B cell (primary cell): ENCODE measurements at regions of chr19 and their contacts with region 1.

Region 1: GRCh38 chr19:16476401-16476800 is 4.6 kb upstream of the EPS15L1 start:
- DNase-seq: no peak
- ATAC-seq: no peak
- H3K4me3 ChIP-seq: no peak overlapping the region
- H3K4me3 Mint-ChIP-seq: no peak overlapping the region
- H3K27ac ChIP-seq: no peak overlapping the region
- H3K27ac Mint-ChIP-seq: no peak overlapping the region
- H3K4me1 ChIP-seq: peaks cover 0 to 6% of the 10 kb centered on the region in 2 donors
- H3K4me1 Mint-ChIP-seq: no peaks in the 10 kb centered on the region
- H3K27me3 ChIP-seq: no peaks in the 10 kb centered on the region
- H3K27me3 Mint-ChIP-seq: no peaks in the 10 kb centered on the region
- CTCF ChIP-seq: no peak

Region 2: GRCh38 chr19:15332311-15332996 is 1143.9 kb before region 1 on chr19 and contains the start of gene BRD4:
- CTCF ChIA-PET with region 1: no interaction called
- POLR2A ChIA-PET with region 1: no interaction called
- intact Hi-C with region 1: no loop called
- DNase-seq: peak; percentile 89
- ATAC-seq: peak; percentile 37
- H3K4me3 ChIP-seq: peak within 1 kb of the TSS; percentile 78 to 99 (median 85)
- H3K4me3 Mint-ChIP-seq: peak within 1 kb of the TSS; percentile 97
- H3K27ac ChIP-seq: peak within 1 kb of the TSS; percentile 92 to 96
- H3K27ac Mint-ChIP-seq: peak within 1 kb of the TSS; percentile 96
- H3K4me1 ChIP-seq: peaks cover 42 to 62% of the 10 kb centered on the region in 2 donors
- H3K4me1 Mint-ChIP-seq: peaks cover 52% of the 10 kb centered on the region
- H3K27me3 ChIP-seq: no peaks in the 10 kb centered on the region
- H3K27me3 Mint-ChIP-seq: no peaks in the 10 kb centered on the region
- CTCF ChIP-seq: no peak
- total RNA-seq, gene BRD4: 209 and 233 TPM in 2 replicates

Region 3: DNA sequence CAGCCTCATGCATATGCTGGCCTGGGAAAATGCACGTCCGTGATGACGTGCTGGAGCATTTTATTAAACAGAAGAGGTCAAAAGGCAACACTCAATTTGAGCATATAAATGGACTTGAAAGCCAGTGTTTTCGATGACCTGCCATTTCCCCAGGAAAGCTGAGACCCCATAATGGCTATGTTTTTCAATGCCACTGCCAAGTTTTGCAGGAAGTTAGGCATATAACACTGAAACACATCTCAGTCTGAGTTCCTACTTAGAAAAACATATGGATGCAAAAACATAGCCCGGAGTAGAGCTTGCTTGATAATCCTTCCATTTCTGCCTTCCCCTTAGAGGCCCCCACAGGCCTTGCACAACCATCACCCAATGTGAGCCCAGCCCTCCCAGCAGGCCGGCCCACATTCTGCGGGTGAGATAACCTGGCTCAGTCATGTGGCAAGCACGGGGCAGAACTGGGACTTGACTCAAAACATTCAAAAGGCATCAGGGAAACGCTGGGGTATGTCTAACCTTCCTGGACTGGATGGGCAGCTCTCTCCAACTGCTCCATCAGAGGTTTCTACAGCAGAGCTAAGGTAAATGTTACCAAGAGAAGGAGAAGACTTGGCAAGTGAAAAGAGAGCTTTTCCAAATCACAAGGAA is 29.6 kb before region 1 on chr19:
- CTCF ChIA-PET with region 1: no interaction called
- POLR2A ChIA-PET with region 1: no interaction called
- intact Hi-C with region 1: loop called (anchors 1 kb)
- DNase-seq: peak; percentile 79
- ATAC-seq: peak; percentile 34
- H3K4me3 ChIP-seq: peak overlapping the region in 1 of 5 experiments; percentile 26
- H3K4me3 Mint-ChIP-seq: peak overlapping the region; percentile 76
- H3K27ac ChIP-seq: peak overlapping the region; percentile 93 to 98
- H3K27ac Mint-ChIP-seq: peak overlapping the region; percentile 97
- H3K4me1 ChIP-seq: peaks cover 86 to 94% of the 10 kb centered on the region in 2 donors
- H3K4me1 Mint-ChIP-seq: peaks cover 85% of the 10 kb centered on the region
- H3K27me3 ChIP-seq: no peaks in the 10 kb centered on the region
- H3K27me3 Mint-ChIP-seq: no peaks in the 10 kb centered on the region
- CTCF ChIP-seq: no peak